Vagina (tissue), 2 donors: ENCODE measurements at regions of chr11 and their contacts with region 1.

Region 1: DNA sequence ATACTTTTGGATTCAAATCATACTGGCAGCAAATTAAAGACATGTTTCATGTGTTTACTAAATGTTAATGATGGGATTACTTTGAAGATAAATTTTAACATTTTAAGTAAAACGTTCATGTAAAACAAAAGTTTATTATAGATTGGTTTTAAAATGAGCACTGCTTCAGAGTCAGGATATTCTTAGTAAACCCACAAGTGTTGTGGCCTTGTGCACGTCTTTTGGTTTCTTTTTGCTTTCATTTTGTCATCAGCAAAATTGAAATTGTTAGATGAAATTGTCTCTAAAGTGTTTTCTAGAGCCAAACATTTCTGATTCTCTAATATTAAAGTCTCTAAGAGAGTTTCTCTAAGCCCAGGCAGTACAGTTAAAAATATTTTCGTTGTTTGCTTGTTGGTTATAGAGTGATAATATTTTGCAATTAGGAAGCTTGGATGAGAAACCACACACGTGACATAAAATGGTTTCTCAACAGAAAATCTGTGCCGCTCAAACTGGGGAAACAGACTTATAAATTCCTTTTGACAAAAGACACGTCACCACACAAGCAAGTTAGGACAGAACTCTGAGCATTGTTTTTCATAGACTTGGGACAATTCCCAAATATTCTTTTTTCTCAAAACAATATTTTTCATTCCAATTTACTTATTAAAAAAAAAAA is 164.4 kb downstream of the TEAD1 start:
- DNase-seq: no peak
- H3K4me3 ChIP-seq: peak overlapping the region in 1 of 2 donors; percentile 13
- H3K27ac ChIP-seq: peak overlapping the region; percentile 56
- H3K4me1 ChIP-seq: peaks cover 51% of the 10 kb centered on the region
- H3K27me3 ChIP-seq: no peaks in the 10 kb centered on the region
- CTCF ChIP-seq: no peak
- POLR2A ChIP-seq: no peak

Region 2: DNA sequence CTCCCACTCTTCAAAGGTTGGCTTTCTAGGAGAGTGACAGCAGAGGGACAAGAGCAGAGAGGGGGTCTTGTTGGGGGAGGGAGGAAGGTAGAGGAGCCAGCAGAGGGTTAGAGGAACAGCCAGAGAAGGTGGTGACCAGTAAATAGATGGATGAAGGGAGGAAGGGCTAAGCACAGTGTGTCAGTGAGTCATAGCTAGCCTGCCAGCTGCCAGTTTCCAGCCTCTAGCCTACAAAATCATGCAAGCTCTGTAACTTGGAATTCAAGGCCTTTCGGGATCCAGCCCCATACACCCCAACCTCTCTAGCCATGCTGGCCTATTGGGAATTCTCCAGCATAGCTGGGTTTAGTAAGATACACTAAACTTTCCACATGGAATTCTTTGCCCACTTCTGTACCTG is 311.8 kb before region 1 on chr11:
- intact Hi-C with region 1: no loop called
- DNase-seq: no peak
- H3K4me3 ChIP-seq: no peak overlapping the region
- H3K27ac ChIP-seq: no peak overlapping the region
- H3K4me1 ChIP-seq: peaks cover 23% of the 10 kb centered on the region
- H3K27me3 ChIP-seq: no peaks in the 10 kb centered on the region
- CTCF ChIP-seq: no peak
- POLR2A ChIP-seq: no peak

Region 3: DNA sequence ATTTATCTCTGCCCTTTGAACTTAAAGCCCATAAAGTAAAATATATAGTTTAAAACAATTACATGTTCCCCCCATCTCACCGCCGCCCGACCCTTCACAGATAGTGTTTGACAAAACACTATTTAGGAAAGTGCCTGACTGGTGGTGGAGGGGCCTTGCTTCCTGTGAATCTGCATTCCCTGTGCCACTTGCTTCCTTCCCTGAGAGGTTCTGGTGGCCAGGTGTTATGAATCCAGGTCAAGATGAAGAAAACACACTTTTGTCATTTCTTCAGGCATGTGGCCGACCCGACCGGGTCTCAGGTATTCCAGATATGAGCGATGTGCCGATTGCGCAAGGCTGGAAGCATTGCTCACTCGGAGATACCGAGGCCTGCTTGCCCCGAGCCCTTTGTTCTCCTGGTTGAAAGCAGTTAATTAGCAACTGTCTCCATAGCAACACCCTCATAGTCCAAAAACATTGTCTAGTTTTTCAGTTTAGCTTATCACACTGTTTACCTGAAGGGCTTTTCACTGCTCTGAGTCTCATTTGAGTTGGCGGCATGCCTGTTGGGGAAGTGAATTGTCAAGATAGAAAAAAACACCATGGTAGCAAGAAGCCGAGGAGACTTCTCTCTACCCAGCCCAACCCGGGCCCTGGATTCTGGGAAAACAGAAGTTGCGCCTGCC is 36.0 kb before region 1 on chr11:
- intact Hi-C with region 1: no loop called
- DNase-seq: no peak
- H3K4me3 ChIP-seq: no peak overlapping the region
- H3K27ac ChIP-seq: no peak overlapping the region
- H3K4me1 ChIP-seq: peaks cover 66% of the 10 kb centered on the region
- H3K27me3 ChIP-seq: no peaks in the 10 kb centered on the region
- CTCF ChIP-seq: no peak
- POLR2A ChIP-seq: no peak

Region 4: DNA sequence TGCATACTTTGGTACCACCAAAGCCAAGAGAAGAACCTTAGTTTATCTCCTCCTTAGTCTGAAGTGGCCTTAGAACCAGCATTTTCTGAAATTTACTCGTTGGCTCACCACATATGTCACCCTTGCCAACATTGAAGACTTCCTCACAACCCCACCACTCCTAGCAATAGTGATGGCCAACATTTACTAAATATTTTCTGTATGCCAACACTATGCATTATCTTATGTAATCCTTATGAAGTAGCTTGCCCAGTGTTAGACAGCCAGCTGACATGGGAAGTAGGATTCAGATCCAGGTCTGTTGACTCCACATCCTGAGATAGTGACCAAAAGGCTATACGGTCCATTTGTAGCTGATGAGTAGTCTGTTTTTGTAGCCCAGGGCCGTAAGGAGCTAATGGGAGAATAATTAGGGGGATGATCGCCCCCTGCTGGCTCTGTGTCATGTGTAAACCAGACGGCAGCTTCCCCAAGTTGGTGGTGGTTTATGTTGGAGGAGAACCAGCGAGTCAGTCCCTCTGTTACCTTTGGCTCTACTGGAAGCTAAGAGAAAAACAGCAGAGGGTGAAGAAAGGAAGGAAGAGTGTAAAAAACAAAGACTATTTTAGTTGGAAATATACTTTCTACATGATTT is 50.0 kb after region 1 on chr11:
- intact Hi-C with region 1: loop called (anchors 10 kb)
- DNase-seq: no peak
- H3K4me3 ChIP-seq: no peak overlapping the region
- H3K27ac ChIP-seq: peak overlapping the region; percentile 70
- H3K4me1 ChIP-seq: peaks cover 14% of the 10 kb centered on the region
- H3K27me3 ChIP-seq: no peaks in the 10 kb centered on the region
- CTCF ChIP-seq: peak; percentile 22 to 69 (median 59)
- POLR2A ChIP-seq: no peak